ENCODE measurements at regions of chr12 and their contacts with region 1.

Region 1: GRCh38 chr12:27549801-27550652 is 26.0 kb downstream of the PPFIBP1 start:
- DNase-seq: peak; percentile 31 to 94
- H3K4me3 ChIP-seq: peak overlapping the region in 1 of 2 donors; percentile 37
- H3K27ac ChIP-seq: peak overlapping the region; percentile 73 to 76
- H3K4me1 ChIP-seq: peaks cover 12 to 76% of the 10 kb centered on the region in 2 donors
- H3K27me3 ChIP-seq: no peaks in the 10 kb centered on the region
- CTCF ChIP-seq: no peak

Region 2: DNA sequence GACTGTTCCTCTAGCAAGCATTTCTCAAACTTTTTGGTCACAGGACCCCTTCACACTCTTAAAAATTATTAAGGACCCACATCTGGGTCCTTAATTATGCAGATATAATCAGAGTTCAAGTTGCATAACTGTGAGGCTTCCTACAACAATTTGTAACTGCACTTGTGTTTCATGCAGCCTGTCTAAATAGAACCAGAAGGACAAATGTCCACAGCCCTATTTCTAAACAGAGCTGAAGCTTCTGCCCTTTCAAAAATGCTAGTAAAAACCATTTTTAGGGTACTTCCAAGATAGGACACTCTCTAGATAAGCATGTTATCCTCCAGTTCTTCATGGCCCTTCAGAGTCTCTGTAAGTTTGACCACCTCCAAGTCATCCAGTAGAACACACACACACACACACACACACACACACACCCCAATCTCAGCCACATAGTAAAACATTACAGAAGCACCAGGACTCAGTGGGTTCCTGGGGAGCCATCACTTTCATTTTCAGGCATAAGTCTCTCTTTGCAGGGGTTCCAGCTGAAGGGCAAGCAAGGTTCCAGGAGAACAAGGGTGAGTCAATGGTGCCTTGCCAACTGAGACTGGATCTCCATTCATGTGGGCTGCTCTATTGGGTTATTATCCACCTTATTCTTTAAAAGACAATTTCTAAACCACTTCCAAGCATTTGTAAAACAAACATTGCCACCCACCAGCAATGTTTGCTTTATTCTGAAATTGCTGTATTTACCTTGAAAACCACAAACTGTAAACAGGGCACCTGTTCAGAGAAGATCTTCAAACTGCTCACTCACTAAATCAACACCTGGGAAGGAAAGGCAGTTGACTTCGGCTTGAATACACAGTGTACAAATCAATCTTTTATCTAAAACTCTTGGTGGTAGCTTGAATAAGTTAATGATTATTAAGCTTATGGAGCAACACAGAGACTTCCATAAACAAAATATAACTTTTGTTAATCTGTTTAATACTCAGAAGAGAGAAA is 781.1 kb before region 1 on chr12:
- intact Hi-C with region 1: no loop called
- DNase-seq: no peak
- H3K4me3 ChIP-seq: no peak overlapping the region
- H3K27ac ChIP-seq: no peak overlapping the region
- H3K4me1 ChIP-seq: peaks cover 0 to 3% of the 10 kb centered on the region in 2 donors
- H3K27me3 ChIP-seq: no peaks in the 10 kb centered on the region
- CTCF ChIP-seq: no peak

Region 3: DNA sequence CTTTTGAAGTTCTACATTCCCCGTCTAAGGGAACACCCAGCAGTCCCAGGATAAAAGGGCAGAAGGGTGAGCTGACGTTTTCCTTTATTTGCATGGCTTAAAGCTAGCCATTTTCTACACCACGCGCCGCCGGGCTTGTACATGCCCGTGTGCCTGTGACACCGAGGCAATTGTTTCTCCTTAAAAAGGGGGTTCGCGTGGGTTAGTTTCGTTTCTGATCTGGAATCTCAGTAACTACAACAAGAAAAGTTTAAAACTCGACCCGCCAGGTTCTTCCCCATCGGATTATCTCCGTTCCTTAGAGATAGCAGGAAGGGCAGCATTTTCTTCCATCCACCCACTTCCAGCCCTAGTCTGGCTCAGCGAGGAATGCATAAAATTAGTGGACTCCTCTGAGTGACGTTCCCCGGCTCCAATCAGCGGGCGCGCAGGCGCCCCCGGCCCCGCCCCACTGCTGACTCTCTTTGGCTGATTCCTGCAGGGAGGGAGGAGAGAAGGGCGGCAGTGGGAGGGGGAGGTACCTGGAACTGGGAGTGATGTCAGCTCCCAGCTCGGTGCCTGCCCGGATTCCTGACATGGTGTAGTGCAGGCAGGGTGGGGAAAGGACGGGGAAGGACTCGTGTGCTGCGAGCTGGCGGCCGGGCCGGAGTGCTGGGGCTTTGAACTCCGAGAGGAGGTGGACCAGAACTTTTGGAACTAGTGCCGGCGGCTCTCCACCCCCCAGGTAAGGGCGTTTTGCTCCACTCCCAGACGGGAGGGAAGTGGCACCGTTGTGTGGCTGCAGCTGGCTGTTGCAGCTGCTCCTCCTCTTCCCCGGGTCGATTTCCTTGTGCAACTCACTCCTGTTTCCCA is 26.2 kb before region 1 on chr12 and contains the start of gene PPFIBP1:
- intact Hi-C with region 1: loop called (anchors 1 kb)
- DNase-seq: peak; percentile 99 to 100
- H3K4me3 ChIP-seq: peak within 1 kb of the TSS; percentile 77 to 79
- H3K27ac ChIP-seq: peak within 1 kb of the TSS; percentile 88 to 90
- H3K4me1 ChIP-seq: peaks cover 3 to 16% of the 10 kb centered on the region in 2 donors
- H3K27me3 ChIP-seq: no peaks in the 10 kb centered on the region
- CTCF ChIP-seq: peak in 2 of 3 experiments; percentile 31 to 44
- total RNA-seq, gene PPFIBP1: 56.4 TPM

Region 4: DNA sequence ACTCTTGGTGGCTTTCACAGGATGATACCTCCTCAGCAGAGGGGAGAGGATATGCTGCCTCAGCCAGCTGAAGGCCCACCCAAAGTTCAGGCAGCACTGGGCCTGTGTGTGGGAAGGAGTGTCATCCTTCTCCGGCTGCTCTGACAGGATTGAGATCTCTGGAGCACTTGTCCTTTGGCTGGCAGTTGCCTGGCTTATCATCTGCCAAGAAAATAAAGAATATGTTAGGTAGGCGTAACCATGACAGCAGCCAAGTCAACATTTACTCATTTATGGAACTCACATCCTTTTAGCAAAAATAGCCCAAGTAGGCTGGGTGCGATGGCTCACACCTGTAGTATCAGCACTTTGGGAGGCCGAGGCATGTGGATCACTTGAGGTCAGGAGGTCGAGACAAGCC is 42.5 kb after region 1 on chr12:
- intact Hi-C with region 1: loop called (anchors 2 kb)
- DNase-seq: peak in 1 of 2 donors; percentile 86
- H3K4me3 ChIP-seq: no peak overlapping the region
- H3K27ac ChIP-seq: peak overlapping the region; percentile 54 to 64
- H3K4me1 ChIP-seq: peaks cover 2 to 26% of the 10 kb centered on the region in 2 donors
- H3K27me3 ChIP-seq: no peaks in the 10 kb centered on the region
- CTCF ChIP-seq: no peak